Pancreas (tissue), 10 donors: ENCODE measurements at regions of chr10 and their contacts with region 1.

Region 1: DNA sequence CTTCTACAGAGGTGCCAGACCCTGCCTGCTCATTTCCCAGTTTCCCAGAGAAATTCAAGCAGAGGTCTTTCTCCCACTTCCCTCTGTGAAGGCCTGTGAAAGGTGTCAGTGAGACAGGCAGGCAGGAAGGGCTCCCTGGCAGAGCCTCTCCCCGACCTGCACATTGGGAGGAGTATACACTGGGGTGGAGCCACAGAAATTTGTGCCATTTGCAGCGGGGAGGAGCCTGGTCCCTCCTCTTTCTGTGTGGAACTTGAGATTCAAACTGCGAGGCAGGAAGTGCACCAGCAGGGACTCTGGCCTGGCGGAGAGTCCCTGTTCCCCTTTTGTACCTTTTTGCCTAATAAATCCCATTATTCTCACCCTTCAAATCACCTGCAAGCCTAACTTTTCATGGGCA is 54.6 kb upstream of the OPN4 start:
- DNase-seq: no peak
- ATAC-seq: peak in 1 of 4 donors; percentile 38
- H3K4me3 ChIP-seq: no peak overlapping the region
- H3K27ac ChIP-seq: no peak overlapping the region
- H3K4me1 ChIP-seq: peaks cover 0 to 13% (median 0%) of the 10 kb centered on the region in 3 donors
- H3K27me3 ChIP-seq: no peaks in the 10 kb centered on the region
- CTCF ChIP-seq: no peak

Region 2: DNA sequence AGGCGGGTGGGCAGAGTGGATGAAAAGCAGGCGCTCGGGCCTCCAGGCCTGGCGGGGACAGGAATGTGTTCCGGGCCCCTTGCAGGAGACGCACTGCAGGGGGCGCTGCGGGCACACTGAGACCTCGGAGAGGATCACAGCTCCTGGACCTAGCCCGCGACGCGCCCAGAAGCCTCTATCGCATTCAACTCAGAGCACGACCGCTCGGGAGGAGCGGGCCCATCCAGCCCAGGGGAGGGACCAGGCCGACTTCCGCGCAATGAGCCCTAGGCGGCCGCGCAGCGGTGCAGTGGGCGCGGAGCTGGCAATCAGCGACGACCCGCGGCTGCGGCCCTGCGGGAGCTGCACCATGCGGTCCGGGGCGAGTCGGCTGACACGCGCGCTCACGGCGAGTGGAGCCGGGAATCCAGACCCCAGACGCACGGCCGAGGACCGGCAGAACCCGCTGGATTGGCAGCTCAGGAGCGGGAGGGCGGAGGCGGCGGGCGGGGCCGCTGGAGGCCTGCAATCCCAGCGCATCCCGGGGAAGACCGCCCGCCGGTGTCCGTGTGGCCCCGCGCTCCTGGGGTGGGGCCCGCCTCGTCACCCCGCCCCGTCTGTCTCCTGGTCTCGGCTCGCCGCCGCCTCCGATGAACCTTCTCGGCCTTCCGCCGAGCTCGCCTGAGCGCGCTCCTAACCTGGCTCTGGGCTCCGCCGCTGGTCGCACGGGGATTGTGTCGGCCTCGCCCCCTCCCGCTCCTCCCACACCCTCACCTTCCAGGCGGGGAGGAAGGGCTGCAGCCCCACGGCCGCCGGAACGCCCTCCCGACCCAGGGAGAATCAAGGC is 199.6 kb before region 1 on chr10:
- intact Hi-C with region 1: loop called in 1 of 3 experiments (anchors 10 kb)
- DNase-seq: peak; percentile 96 to 100 (median 98)
- ATAC-seq: peak; percentile 86 to 92 (median 88)
- H3K4me3 ChIP-seq: peak overlapping the region; percentile 49 to 80 (median 64)
- H3K27ac ChIP-seq: peak overlapping the region; percentile 84 to 97 (median 93)
- H3K4me1 ChIP-seq: peaks cover 5 to 11% (median 10%) of the 10 kb centered on the region in 3 donors
- H3K27me3 ChIP-seq: no peaks in the 10 kb centered on the region
- CTCF ChIP-seq: peak; percentile 91 to 98 (median 96)

Region 3: DNA sequence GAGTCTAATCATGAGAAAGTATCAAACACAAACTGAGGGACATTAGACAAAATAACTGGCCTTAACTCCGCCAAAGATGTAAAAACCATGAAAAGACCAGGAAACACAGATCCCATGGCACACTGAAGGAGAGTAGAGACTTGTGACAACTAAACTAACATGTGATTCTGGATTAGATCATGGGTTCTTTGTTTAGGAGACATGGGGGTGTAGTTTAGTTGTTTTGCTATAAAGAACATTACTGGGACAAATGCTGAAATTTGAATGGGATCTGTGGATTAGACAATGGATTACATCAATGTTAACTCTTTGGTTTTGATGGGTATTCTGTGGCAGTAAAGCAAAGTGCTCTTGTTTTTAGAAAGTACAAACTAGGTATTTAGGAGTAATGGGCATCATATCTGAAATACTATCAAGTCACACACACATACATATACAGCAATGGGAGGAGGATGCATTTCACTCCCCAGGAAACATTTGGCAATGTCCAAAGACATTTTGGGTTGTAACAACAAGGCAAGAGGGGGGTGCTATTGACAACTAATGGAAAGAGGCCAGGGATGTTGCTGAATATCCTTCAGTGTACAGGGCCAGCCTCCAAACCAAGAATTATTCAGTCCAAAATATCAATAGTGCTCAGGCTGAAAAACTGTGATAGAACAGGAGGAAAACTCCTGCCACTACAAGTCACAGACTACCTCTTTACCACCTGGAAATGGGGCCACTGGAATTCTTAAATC is 110.5 kb before region 1 on chr10:
- intact Hi-C with region 1: no loop called
- DNase-seq: no peak
- ATAC-seq: no peak
- H3K4me3 ChIP-seq: no peak overlapping the region
- H3K27ac ChIP-seq: no peak overlapping the region
- H3K4me1 ChIP-seq: no peaks in the 10 kb centered on the region
- H3K27me3 ChIP-seq: no peaks in the 10 kb centered on the region
- CTCF ChIP-seq: no peak